ENCODE measurements at regions of chrX and their contacts with region 1.

Region 1: DNA sequence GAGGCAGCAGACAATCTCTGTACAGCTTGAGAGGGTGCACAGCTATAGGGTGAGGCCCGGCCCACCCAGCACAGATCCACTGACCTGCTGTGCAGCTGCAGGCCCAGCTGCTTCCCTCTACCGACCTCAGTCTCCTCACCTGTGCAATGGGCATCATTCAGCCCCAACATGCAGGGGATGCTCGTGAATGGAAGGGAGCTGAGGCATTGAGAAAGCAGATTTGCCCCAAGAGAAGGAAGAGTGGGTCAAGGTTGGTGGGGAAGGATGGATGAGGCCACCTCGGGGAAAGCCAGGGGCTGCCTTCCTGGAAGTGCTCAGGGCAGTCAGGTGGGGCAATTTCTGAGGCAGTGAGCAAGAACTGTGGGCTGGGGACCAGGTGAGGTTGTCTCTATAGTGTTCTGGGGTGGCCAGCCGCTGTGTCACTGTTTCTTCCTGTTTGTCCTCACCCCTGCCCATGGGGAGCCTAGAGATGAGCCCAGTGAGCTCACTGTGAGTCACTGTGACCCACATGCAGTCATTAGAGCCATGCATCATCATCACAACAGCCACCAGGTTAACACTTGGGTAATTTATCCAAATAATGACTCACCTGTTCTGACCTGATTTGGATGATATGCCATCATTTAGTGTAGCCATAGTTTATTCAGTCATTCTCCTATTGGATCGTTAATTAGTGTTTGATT is 22.2 kb upstream of the XAGE2 start:
- DNase-seq: no peak
- H3K4me3 ChIP-seq: no peak overlapping the region
- CTCF ChIP-seq: no peak

Region 2: GRCh38 chrX:52359614-52360232 is 13.1 kb after region 1 on chrX:
- CTCF ChIA-PET with region 1: interaction called, 10 read pairs
- POLR2A ChIA-PET with region 1: no interaction called
- DNase-seq: no peak
- H3K4me3 ChIP-seq: no peak overlapping the region
- CTCF ChIP-seq: no peak